ENCODE measurements at regions of chr22 and their contacts with region 1.

Region 1: GRCh38 chr22:22959147-22959827 is 71.7 kb downstream of the IGLL5 start:
- DNase-seq: peak; percentile 84
- H3K4me3 Mint-ChIP-seq: no peak overlapping the region
- H3K27ac Mint-ChIP-seq: no peak overlapping the region
- H3K4me1 Mint-ChIP-seq: no peaks in the 10 kb centered on the region
- H3K27me3 Mint-ChIP-seq: peaks cover 46% of the 10 kb centered on the region

Region 2: DNA sequence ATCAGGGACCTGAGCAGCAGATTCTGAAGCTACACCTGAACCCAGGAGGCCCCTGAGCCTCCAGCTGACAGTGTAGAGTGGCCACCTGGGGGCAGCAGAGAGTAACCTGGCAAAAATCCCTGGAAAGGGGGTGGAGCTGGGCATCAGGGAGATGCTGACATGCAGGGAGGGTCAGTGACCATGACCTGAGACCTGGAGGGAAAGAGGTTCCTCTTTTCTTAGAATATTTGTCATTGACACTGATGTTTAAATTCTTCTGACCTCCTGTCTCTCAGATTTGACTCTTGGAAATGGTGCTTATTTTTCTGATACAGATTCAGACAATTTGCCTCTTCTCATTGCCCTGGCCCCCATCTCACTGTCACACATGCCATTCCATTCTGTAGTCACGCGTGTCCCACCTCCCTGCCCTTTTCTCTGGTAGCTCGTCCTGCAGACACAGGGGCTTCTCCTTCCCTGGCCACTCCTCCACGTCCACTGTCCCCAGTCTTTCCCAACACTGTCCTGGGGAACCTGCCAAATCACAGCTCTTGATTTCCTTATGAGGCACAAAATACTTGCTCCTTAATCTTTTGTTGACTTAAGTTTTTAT is 188.9 kb before region 1 on chr22:
- CTCF ChIA-PET with region 1: interaction called, 19 read pairs
- DNase-seq: peak; percentile 64
- H3K4me3 Mint-ChIP-seq: no peak overlapping the region
- H3K27ac Mint-ChIP-seq: no peak overlapping the region
- H3K4me1 Mint-ChIP-seq: no peaks in the 10 kb centered on the region
- H3K27me3 Mint-ChIP-seq: peaks cover 61% of the 10 kb centered on the region

Region 3: GRCh38 chr22:22802339-22802970 is 156.8 kb before region 1 on chr22:
- CTCF ChIA-PET with region 1: interaction called, 15 read pairs
- DNase-seq: peak; percentile 67
- H3K4me3 Mint-ChIP-seq: no peak overlapping the region
- H3K27ac Mint-ChIP-seq: no peak overlapping the region
- H3K4me1 Mint-ChIP-seq: no peaks in the 10 kb centered on the region
- H3K27me3 Mint-ChIP-seq: peaks cover 63% of the 10 kb centered on the region

Region 4: GRCh38 chr22:22848364-22848866 is 110.9 kb before region 1 on chr22:
- CTCF ChIA-PET with region 1: interaction called, 43 read pairs
- DNase-seq: peak; percentile 83
- H3K4me3 Mint-ChIP-seq: no peak overlapping the region
- H3K27ac Mint-ChIP-seq: no peak overlapping the region
- H3K4me1 Mint-ChIP-seq: peaks cover 14% of the 10 kb centered on the region
- H3K27me3 Mint-ChIP-seq: peaks cover 54% of the 10 kb centered on the region

Region 5: GRCh38 chr22:22942511-22943329 is 16.6 kb before region 1 on chr22:
- CTCF ChIA-PET with region 1: interaction called, 28 read pairs
- DNase-seq: peak; percentile 89
- H3K4me3 Mint-ChIP-seq: no peak overlapping the region
- H3K27ac Mint-ChIP-seq: no peak overlapping the region
- H3K4me1 Mint-ChIP-seq: peaks cover 2% of the 10 kb centered on the region
- H3K27me3 Mint-ChIP-seq: peaks cover 67% of the 10 kb centered on the region

Region 6: GRCh38 chr22:23063539-23064380 is 104.5 kb after region 1 on chr22:
- CTCF ChIA-PET with region 1: no interaction called
- DNase-seq: no peak
- H3K4me3 Mint-ChIP-seq: no peak overlapping the region
- H3K27ac Mint-ChIP-seq: no peak overlapping the region
- H3K4me1 Mint-ChIP-seq: peaks cover 5% of the 10 kb centered on the region
- H3K27me3 Mint-ChIP-seq: peaks cover 34% of the 10 kb centered on the region

Region 7: DNA sequence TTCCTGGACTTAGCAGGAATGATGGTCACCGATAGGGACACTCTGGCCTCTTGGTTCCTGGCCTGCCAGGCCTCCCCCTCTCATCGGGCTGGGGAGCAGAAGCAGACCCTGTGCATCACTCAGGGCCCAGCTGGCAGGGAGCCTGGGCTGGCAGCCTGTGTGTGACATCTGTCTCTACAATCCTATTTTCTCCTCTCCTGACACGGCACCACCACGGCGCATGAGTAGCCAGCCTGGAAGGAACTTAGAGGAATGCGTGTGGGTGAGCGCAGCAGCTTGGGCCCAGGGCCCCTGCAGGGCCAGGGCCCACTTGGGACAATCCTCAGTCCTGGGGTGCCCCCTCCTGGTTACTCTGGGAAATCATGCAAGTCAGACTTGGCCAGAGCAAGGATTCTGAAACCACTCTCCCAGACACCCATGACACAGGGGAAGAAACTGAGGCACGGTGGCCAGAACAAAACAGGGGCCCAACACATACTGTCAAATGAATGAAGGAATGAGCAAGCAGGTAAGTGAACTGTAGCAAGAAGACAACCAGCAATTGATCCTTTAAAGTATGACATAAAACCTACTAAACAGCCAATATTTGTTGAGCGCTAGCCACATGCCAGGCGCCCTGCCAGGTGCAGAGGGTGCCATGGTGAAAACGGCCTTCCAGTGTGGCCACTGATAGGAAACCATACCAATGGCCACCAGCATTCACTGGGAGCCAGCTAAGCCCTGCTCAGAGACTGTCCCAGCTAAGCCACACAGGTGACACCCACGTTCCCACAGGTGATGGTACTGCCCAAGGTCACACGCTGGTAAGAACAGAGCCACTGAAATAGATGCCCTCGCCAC is 169.2 kb after region 1 on chr22:
- CTCF ChIA-PET with region 1: interaction called, 162 read pairs
- DNase-seq: peak; percentile 80
- H3K4me3 Mint-ChIP-seq: no peak overlapping the region
- H3K27ac Mint-ChIP-seq: no peak overlapping the region
- H3K4me1 Mint-ChIP-seq: no peaks in the 10 kb centered on the region
- H3K27me3 Mint-ChIP-seq: peaks cover 37% of the 10 kb centered on the region

Region 8: DNA sequence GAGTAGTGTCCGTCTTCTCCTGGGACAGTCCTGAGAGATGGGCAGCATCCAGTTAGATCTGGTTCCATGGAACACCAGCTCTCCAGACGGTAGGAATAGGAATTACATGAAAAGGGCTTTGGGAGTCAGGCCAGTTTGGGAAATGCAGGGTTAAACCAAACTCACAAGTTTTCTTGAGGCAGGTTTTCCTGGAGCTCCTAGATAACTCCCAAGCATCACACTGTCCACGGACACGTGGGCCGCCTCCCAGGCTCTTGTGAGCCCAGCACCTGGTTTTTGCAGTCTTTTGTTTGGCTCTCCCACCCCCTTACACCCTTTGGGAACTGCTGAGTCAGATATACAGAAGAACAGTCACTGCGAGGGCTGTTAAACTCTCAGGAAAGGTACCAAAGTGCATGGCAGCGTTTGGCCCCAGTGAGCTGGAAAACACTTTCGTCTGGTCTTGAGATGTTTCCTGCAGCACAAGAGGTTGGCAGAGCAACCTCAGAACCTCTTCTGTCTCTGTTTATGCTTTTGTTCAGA is 311.0 kb after region 1 on chr22:
- CTCF ChIA-PET with region 1: no interaction called
- DNase-seq: no peak
- H3K4me3 Mint-ChIP-seq: no peak overlapping the region
- H3K27ac Mint-ChIP-seq: no peak overlapping the region
- H3K4me1 Mint-ChIP-seq: no peaks in the 10 kb centered on the region
- H3K27me3 Mint-ChIP-seq: no peaks in the 10 kb centered on the region

Measured in activated naive CD4-positive, alpha-beta T cell treated with anti-CD3 and anti-CD28 coated beads, Interleukin-2, amount 10 ng/mL, durations not matched to agents 7 days and 5 days (primary cell).